Activated naive CD4-positive, alpha-beta T cell treated with anti-CD3 and anti-CD28 coated beads for 36 hours (primary cell): ENCODE measurements at regions of chr3 and their contacts with region 1.

Region 1: DNA sequence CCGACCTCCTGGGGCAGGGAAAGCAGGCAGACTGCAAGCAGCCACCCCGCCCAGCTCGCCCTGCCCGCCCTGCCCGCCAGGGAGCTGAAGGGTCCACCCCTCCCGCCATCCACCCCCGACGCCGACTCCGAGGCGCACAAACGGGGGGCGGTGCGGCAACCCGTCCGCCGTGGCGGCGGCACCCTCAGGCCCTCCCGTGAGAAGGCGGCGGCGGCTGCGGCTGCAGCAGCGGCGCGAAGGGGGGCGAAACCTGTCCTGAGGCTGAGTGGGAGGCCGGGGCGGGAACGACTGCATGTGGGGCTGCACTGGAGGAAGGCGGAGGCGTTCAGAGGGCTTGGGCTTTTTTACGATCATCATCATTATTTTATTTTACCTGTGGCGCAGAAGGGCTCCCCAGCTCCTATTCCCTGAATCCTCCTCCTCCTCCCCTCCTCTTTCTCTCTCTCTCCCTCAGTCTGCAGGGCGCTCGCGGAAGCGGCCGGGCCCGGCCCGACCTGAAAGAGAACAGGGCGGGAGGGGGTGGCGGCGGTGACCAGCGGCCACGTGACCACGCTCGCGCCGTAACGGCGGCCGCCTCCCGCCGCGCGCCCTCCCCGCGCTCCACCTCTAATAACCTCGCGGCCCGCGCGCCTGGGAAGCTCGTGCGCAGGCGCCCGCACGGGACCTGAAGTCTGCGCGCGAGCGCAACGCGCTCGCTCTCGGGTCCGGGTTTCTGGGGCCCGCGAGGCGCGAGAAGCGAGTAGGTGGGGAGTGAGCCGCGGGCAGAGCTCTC is at the start of gene TBC1D5:
- DNase-seq: peak; percentile 95
- H3K4me3 Mint-ChIP-seq: peak within 1 kb of the TSS; percentile 92
- H3K27ac Mint-ChIP-seq: peak within 1 kb of the TSS; percentile 94
- H3K4me1 Mint-ChIP-seq: peaks cover 40% of the 10 kb centered on the region
- H3K27me3 Mint-ChIP-seq: no peaks in the 10 kb centered on the region
- total RNA-seq, gene TBC1D5: 54.4 to 57.2 TPM

Region 2: DNA sequence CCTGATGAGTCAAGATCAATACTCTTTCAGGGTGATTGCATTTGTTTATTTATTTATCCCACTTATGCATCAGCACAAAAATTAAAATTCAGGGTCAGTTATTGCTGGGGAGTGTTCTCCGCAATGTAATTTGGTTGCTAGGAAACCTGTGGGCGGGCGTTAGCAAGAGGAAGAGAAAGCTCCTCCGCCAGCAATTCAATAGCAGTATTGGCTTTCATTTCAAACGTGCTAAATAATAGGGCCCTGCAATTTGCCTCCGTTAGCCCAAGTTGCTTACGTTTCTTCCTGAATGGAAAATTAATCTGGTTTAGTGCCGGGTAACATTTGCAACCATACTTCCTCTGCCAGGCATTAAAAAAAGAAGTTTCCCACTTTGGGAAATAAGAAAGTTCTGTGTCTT is 893.1 kb before region 1 on chr3:
- CTCF ChIA-PET with region 1: no interaction called
- intact Hi-C with region 1: loop called (anchors 5 kb)
- DNase-seq: peak; percentile 82
- H3K4me3 Mint-ChIP-seq: peak overlapping the region; percentile 53
- H3K27ac Mint-ChIP-seq: peak overlapping the region; percentile 64
- H3K4me1 Mint-ChIP-seq: peaks cover 37% of the 10 kb centered on the region
- H3K27me3 Mint-ChIP-seq: no peaks in the 10 kb centered on the region

Region 3: DNA sequence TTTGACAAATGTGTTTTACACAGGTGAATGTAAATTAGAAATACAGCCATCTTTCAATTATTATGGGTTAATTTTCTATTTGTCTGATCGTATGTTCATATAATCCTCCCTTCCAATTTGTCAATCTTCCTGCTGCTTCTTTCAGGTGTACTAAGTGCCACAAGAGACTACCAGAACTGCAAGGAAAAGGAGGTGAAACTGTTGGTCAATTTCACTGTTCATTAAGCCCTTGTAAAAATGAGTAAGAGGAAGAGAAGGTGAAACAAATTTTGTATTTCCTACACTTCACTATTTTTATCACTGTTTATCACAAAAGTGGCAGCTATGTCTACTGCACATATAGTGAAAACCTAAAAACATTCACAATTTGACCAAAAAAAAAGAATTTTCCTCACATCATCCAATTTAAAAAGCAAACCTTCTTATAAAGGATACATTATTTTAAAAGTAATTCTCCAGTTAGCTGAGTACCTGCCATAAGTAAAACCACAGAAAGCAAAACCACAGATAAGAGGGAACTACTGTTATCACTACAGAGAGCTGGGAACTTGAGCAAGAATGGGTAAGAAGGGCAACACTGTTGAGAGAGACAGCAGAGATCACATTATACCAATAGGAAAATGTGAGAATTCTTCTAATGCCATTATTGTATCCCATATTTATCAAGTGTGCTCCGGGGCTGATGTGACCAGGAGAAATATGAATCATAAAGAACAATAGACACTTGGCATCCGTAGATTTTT is 162.8 kb before region 1 on chr3:
- CTCF ChIA-PET with region 1: no interaction called
- intact Hi-C with region 1: loop called (anchors 5 kb)
- DNase-seq: no peak
- H3K4me3 Mint-ChIP-seq: no peak overlapping the region
- H3K27ac Mint-ChIP-seq: no peak overlapping the region
- H3K4me1 Mint-ChIP-seq: peaks cover 4% of the 10 kb centered on the region
- H3K27me3 Mint-ChIP-seq: no peaks in the 10 kb centered on the region

Region 4: GRCh38 chr3:17771177-17772017 is 29.1 kb after region 1 on chr3:
- CTCF ChIA-PET with region 1: no interaction called
- intact Hi-C with region 1: loop called (anchors 1 kb)
- DNase-seq: no peak
- H3K4me3 Mint-ChIP-seq: no peak overlapping the region
- H3K27ac Mint-ChIP-seq: no peak overlapping the region
- H3K4me1 Mint-ChIP-seq: peaks cover 10% of the 10 kb centered on the region
- H3K27me3 Mint-ChIP-seq: peaks cover 17% of the 10 kb centered on the region

Region 5: DNA sequence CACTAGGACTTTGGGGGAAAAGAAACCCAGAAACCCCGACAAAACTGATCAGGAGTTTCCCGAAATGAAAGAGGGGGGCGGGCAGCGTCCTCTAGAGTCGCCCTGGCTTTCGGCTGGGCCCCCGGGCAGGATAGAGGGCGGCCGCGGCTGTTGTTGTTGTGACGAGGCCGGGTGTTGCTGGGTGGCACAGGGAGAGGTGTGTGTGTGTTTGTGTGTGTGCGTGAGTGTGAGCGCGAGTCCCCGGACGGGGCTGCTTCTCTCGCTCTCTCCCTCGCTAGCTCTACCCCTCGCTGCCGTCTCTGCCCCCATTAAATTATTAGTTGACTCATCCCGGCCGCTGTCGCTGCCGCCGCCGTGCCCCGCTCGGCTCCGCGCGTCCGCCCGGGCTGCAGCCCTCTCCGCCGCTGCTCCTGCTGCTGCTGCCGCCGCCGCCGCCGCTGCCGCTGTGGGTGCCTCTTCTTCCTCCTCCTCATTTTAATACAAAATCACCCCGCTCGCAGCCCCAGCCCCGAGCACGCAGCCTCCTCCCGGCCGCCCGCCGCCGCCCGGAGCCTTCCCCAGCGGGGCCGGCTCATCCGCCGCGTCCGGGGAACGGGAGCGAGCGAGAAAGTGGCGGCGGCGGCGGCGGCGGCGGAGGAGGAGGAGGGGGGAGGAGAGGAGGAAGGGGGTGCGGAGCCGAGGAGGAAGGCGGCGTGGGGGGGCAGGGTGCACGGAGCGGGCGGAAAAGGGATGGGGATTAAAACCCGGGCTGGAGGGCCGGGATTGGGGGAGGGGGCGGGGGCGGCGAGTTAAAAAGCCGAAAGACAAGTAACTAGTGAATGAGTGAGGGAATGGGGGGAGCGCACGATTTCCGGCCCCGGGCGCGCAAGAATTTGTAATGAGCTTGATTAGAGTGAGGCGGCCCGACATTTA is 682.7 kb after region 1 on chr3 and contains the start of gene SATB1:
- CTCF ChIA-PET with region 1: no interaction called
- intact Hi-C with region 1: loop called (anchors 5 kb)
- DNase-seq: peak; percentile 84
- H3K4me3 Mint-ChIP-seq: peak within 1 kb of the TSS; percentile 86
- H3K27ac Mint-ChIP-seq: peak within 1 kb of the TSS; percentile 98
- H3K4me1 Mint-ChIP-seq: peaks cover 73% of the 10 kb centered on the region
- H3K27me3 Mint-ChIP-seq: no peaks in the 10 kb centered on the region
- total RNA-seq, gene SATB1: 303 to 305 TPM